Activated CD4-positive, alpha-beta T cell treated with anti-CD3 and anti-CD28 coated beads for 36 hours (primary cell): ENCODE measurements at regions of chr7 and their contacts with region 1.

Region 1: GRCh38 chr7:157010588-157011332 is at the start of gene MNX1:
- DNase-seq: peak; percentile 73
- ATAC-seq: peak; percentile 83
- H3K4me3 Mint-ChIP-seq: peak within 1 kb of the TSS; percentile 39
- H3K27ac Mint-ChIP-seq: no peak within 1 kb of the TSS
- H3K4me1 Mint-ChIP-seq: peaks cover 15% of the 10 kb centered on the region
- H3K27me3 Mint-ChIP-seq: peaks cover 69% of the 10 kb centered on the region
- total RNA-seq, gene MNX1: not detected

Region 2: GRCh38 chr7:155815332-155816191 is 1195.2 kb before region 1 on chr7:
- CTCF ChIA-PET with region 1: no interaction called
- POLR2A ChIA-PET with region 1: no interaction called
- intact Hi-C with region 1: loop called in 1 of 2 experiments (anchors 5 kb)
- DNase-seq: peak; percentile 89
- ATAC-seq: peak; percentile 90
- H3K4me3 Mint-ChIP-seq: no peak overlapping the region
- H3K27ac Mint-ChIP-seq: no peak overlapping the region
- H3K4me1 Mint-ChIP-seq: peaks cover 12% of the 10 kb centered on the region
- H3K27me3 Mint-ChIP-seq: peaks cover 41% of the 10 kb centered on the region

Region 3: GRCh38 chr7:156612930-156613329 is 397.8 kb before region 1 on chr7:
- CTCF ChIA-PET with region 1: no interaction called
- POLR2A ChIA-PET with region 1: no interaction called
- intact Hi-C with region 1: loop called in 1 of 2 experiments (anchors 10 kb)
- DNase-seq: peak; percentile 87
- ATAC-seq: peak; percentile 99
- H3K4me3 Mint-ChIP-seq: no peak overlapping the region
- H3K27ac Mint-ChIP-seq: no peak overlapping the region
- H3K4me1 Mint-ChIP-seq: peaks cover 25% of the 10 kb centered on the region
- H3K27me3 Mint-ChIP-seq: peaks cover 47% of the 10 kb centered on the region

Region 4: GRCh38 chr7:157032644-157033482 is 22.1 kb after region 1 on chr7:
- CTCF ChIA-PET with region 1: no interaction called
- POLR2A ChIA-PET with region 1: no interaction called
- intact Hi-C with region 1: no loop called
- DNase-seq: no peak
- ATAC-seq: no peak
- H3K4me3 Mint-ChIP-seq: no peak overlapping the region
- H3K27ac Mint-ChIP-seq: no peak overlapping the region
- H3K4me1 Mint-ChIP-seq: no peaks in the 10 kb centered on the region
- H3K27me3 Mint-ChIP-seq: peaks cover 38% of the 10 kb centered on the region

Region 5: GRCh38 chr7:157684157-157684908 is 673.6 kb after region 1 on chr7:
- CTCF ChIA-PET with region 1: no interaction called
- POLR2A ChIA-PET with region 1: no interaction called
- intact Hi-C with region 1: loop called (anchors 5 to 10 kb)
- DNase-seq: no peak
- ATAC-seq: no peak
- H3K4me3 Mint-ChIP-seq: no peak overlapping the region
- H3K27ac Mint-ChIP-seq: no peak overlapping the region
- H3K4me1 Mint-ChIP-seq: peaks cover 14% of the 10 kb centered on the region
- H3K27me3 Mint-ChIP-seq: peaks cover 70% of the 10 kb centered on the region